Pancreas (tissue), 10 donors: ENCODE measurements at regions of chr4 and their contacts with region 1.

Region 1: GRCh38 chr4:89434364-89434988 is 126.9 kb upstream of the GPRIN3 start:
- DNase-seq: no peak
- ATAC-seq: peak; percentile 66 to 89 (median 86)
- H3K4me3 ChIP-seq: no peak overlapping the region
- H3K27ac ChIP-seq: no peak overlapping the region
- H3K4me1 ChIP-seq: no peaks in the 10 kb centered on the region
- H3K27me3 ChIP-seq: no peaks in the 10 kb centered on the region
- CTCF ChIP-seq: peak; percentile 32 to 71 (median 66)

Region 2: DNA sequence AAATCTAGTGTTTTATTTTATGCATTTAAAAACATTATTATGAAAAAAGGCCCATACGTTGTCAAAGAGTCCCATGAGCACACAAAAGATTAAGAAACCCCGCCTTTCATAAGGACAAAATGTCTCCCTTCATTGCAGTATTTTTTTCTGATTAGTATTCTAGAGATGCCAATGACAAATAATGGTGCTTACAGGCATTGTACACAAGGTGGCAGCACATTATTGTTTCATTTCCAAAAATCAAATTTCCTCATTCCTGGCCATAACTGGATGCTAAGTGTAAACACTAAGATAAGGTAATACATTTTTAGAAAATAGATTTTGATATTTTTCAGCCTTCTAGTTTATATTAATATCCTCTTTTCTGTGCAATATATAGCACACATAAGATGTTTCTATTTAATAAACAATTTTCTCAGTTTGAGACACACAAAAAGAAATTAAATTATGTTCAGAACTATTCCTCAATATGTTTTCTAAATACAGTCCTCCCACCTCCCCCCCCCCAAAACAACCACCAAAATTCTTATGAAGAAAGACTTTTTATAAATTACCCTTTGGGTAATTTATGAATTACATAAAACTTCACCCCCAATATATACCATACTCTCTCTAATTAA is 275.5 kb before region 1 on chr4:
- intact Hi-C with region 1: loop called in 1 of 3 experiments (anchors 10 kb)
- DNase-seq: peak in 1 of 6 donors; percentile 25
- ATAC-seq: peak; percentile 69 to 95 (median 90)
- H3K4me3 ChIP-seq: no peak overlapping the region
- H3K27ac ChIP-seq: no peak overlapping the region
- H3K4me1 ChIP-seq: no peaks in the 10 kb centered on the region
- H3K27me3 ChIP-seq: no peaks in the 10 kb centered on the region
- CTCF ChIP-seq: peak; percentile 44 to 82 (median 62)

Region 3: DNA sequence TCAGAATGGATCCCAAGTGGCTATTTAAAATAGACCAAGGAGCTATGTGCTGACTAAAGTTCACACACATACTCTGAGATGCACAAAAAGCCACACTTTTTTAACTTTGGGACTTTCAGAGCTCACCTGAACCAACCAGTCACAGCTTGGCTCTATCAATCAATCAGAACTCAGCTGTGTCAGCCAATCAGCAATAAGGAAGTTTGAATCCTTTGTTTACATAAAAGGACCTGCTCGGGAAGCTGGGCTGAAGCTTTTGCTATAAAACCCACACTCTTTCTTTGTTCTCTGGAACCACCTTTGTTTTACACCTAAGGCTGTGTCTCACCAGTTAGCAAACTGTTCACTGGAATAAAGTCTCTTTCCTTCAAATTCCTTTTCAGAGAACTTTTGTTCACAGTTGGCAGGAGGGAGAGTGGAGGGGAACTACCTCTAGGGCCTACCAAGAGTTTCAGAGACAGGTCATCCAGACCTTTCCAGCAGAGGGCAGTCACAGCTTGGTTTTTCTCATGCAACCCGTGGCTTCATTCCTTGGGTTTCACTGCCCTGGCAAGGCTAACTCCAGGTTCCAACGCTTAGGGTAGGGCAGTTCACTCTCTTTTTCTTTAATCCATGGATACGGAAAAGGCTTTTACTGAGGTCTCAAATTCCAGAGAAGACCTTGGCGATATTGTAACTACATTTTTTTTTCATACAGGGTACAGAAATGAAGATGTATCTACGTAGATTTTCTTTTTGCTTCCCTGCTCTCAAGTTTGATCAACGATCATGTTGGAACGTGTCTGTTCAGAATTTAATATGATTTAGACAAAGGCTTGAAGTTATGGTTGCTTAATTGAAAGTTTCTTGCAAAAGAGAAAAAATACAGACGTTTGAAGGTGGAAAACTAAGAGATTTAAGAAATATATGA is 207.6 kb before region 1 on chr4:
- intact Hi-C with region 1: loop called (anchors 2 to 10 kb)
- DNase-seq: peak; percentile 51 to 91 (median 79)
- ATAC-seq: peak; percentile 99 to 100 (median 100)
- H3K4me3 ChIP-seq: no peak overlapping the region
- H3K27ac ChIP-seq: peak overlapping the region in 1 of 4 donors; percentile 49
- H3K4me1 ChIP-seq: peaks cover 0 to 5% (median 0%) of the 10 kb centered on the region in 3 donors
- H3K27me3 ChIP-seq: no peaks in the 10 kb centered on the region
- CTCF ChIP-seq: peak; percentile 42 to 70 (median 64)